GM18951 (cell line): ENCODE measurements at regions of chr6 and their contacts with region 1.

Region 1: GRCh38 chr6:3258720-3259490 is at the start of gene PSMG4:
- POLR2A ChIP-seq: peak; percentile 73

Region 2: DNA sequence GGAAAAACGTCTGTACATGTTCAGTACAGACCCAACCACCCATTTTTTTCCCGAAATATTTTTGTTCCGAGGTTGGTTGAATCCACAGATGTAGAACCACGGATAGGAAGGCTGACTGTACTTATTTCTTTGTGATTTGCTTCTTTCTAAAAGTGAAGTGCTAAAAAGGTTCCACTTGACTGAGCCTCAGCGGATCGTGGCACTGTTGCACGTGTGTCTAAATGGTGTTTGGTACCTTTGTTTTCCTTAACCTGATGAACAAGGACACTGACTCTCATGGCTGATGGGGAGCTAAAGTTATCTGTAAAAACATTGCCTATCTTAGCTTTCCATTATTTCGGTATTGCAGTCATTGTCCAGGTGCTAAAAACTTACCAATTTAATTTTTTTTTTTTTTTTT is 134.2 kb before region 1 on chr6:
- in situ Hi-C with region 1: loop called (anchors 10 kb)
- POLR2A ChIP-seq: no peak

Region 3: DNA sequence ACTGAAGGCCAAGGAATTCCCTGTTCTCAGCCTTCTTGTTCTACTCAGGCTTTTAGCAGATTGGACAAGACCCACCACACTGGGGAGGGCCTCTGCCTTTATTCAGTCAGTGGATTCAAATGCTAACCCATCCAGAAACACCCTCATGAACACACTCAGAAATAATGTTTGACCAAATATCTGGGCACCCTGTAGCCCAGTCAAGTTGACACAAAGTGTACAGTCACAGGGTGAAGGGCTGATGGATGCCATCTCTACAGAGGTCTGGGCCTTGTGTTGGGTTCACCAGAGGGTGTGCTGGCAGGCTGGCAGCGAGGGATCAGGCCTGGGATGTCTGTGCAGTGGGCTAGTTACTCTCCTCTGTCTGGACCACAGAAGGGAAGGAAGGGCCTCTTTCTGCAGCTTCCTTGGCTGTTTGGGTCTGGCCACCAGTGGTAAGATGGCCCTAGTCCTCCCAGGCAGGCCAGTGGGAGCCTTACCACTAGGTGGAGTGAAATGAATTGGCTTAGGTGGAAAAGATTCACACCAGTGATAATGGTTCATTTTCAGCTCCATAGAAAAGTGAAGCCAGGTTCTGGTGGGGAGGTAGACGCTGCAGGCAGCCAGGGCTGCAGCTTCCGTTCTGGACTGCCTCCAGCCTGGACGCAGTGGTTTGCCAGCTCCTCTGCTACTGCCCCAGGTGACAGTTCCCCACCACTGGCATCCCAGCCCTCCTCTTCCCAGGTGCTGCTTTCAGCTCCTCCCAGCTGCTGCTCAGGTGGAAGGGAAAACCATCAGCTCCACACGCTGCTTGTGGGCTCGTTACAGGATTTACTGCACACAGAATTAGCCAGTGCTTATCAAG is 110.8 kb before region 1 on chr6:
- in situ Hi-C with region 1: no loop called
- POLR2A ChIP-seq: no peak